AG04450 (cell line): ENCODE measurements at regions of chr7 and their contacts with region 1.

Region 1: DNA sequence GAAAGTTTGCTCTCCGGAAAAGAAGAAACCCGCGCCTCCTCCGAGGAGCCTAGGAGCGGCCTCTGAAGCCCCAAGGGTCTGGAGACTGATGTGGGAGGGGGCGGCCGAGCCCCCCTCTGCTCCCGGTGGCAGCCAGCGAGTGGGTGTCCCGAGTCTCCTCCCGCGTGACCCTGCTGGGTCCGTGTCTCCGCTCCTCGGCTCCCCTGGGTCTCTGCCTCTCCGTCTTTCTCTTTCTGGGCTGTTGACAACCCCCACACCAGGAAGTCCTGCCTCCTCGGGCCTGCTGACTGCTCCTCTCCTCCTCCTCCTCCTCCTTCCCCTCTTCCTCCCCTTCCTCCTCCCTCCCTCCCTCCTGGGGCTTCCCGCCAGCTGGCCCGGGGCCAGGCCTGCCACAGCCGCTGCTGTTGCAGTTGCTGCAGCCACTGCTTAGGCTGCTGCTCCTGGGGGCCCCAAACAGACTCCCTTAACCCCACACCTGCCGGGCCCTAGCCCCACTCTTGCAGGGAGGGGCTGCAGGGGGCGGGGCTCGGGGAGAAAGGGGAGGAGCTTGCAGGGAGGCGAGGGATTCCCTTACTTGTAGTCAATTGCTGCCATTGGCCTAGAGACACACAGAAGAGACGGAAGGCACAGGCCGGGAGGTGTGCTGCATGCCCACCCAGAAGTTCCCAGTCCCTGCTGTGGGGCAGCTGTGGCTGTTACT is at the start of gene TSC22D4:
- DNase-seq: peak; percentile 81
- H3K4me3 ChIP-seq: peak within 1 kb of the TSS; percentile 94
- H3K27ac ChIP-seq: peak within 1 kb of the TSS; percentile 68
- H3K27me3 ChIP-seq: no peaks in the 10 kb centered on the region
- CTCF ChIP-seq: no peak
- polyA plus RNA-seq, gene TSC22D4: 10.2 and 11.3 TPM in 2 replicates

Region 2: GRCh38 chr7:99997545-99998137 is 481.5 kb before region 1 on chr7:
- CTCF ChIA-PET with region 1: no interaction called
- POLR2A ChIA-PET with region 1: no interaction called
- DNase-seq: no peak
- H3K4me3 ChIP-seq: peak overlapping the region; percentile 39
- H3K27ac ChIP-seq: no peak overlapping the region
- H3K27me3 ChIP-seq: no peaks in the 10 kb centered on the region
- CTCF ChIP-seq: peak; percentile 23; the same call in 1 of the 2 replicates

Region 3: DNA sequence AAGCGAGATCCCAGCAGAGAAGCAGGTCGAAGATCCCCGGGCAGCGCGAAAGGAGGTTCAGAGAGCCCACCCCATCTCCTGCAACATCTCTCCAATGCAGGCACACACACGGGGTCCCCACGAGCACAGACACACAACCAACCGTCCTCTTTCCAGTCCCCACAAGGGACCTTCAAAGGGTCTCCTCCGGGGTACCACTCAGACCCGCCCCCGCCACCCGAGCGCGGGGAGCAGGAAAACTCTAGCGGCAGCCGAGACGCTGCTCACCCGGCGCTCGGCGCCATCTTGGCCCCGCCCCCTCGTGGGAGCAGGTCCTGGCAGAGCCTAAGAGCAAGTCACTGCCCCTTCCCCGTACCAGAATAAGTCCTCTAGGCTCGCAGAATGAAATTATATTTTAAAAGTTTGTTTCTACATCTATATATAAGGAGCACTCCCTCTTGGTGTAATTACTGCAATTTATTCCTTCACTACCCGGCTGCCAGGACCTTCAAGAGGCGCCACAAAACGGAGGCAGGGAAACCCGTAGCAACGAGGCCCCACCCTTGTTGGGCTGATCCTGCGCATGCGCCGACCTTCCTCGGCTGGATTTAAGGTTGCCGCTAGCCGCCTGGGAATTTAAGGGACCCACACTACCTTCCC is 359.9 kb before region 1 on chr7 and contains the starts of genes CNPY4 and TAF6:
- CTCF ChIA-PET with region 1: no interaction called
- POLR2A ChIA-PET with region 1: no interaction called
- DNase-seq: peak; percentile 91
- H3K4me3 ChIP-seq: peak within 1 kb of the TSS; percentile 98
- H3K27ac ChIP-seq: peak within 1 kb of the TSS; percentile 74
- H3K27me3 ChIP-seq: no peaks in the 10 kb centered on the region
- CTCF ChIP-seq: no peak
- polyA plus RNA-seq, gene CNPY4: 26.3 and 29.7 TPM in 2 replicates
- polyA plus RNA-seq, gene TAF6: 28.2 and 31.2 TPM in 2 replicates

Region 4: GRCh38 chr7:100428199-100428966 is 50.7 kb before region 1 on chr7 and contains the start of gene ZCWPW1:
- CTCF ChIA-PET with region 1: no interaction called
- POLR2A ChIA-PET with region 1: interaction called, 15 read pairs
- DNase-seq: peak; percentile 95
- H3K4me3 ChIP-seq: peak within 1 kb of the TSS; percentile 86
- H3K27ac ChIP-seq: peak within 1 kb of the TSS; percentile 100
- H3K27me3 ChIP-seq: no peaks in the 10 kb centered on the region
- CTCF ChIP-seq: 0 out of 2 replicates have a peak, but pooled peaks have one; percentile 9
- polyA plus RNA-seq, gene ZCWPW1: 0.89 and 1.5 TPM in 2 replicates

Region 5: DNA sequence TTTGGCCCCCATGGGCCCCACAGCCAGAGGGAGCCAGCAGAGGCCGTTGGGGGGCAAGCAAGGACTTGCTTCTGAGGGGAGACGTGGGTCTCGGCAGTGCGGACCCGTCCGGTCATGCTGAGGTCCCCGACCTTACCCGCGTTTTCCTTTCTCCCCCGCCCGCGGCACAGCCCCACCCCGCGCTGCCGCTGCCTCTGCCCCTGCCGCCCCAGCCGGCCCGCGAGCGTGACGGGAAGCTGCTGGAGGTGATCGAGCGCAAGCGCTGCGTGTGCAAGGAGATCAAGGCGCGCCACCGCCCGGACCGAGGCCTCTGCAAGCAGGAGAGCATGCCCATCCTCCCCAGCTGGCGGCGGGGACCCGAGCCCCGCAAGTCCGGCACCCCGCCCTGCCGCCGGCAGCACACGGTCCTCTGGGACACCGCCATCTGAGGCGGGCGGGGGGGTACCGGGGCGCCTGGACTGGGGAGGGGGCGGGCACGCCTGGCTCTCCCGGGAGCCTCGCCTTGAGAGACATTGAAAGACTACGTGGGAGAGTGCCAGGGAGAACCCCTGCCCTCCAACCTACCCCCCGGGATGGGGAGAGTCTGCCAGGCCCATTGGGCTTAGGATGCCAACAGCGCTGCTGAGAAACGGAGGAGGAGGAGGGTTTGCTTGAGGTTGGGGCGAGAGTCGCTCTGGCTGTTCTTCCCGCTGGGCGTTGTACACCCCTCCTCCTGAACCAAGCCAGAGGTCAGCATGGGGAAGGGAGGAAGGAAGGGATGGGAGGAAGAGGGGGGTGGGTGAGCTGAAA is 14.6 kb after region 1 on chr7:
- CTCF ChIA-PET with region 1: interaction called, 17 read pairs
- POLR2A ChIA-PET with region 1: interaction called, 6 read pairs
- DNase-seq: no peak
- H3K4me3 ChIP-seq: peak overlapping the region; percentile 29; the same call in 1 of the 2 replicates
- H3K27ac ChIP-seq: no peak overlapping the region
- H3K27me3 ChIP-seq: peaks cover 3% of the 10 kb centered on the region
- CTCF ChIP-seq: no peak

Region 6: GRCh38 chr7:100520138-100520537 is 41.0 kb after region 1 on chr7:
- CTCF ChIA-PET with region 1: interaction called, 11 read pairs
- POLR2A ChIA-PET with region 1: no interaction called
- DNase-seq: no peak
- H3K4me3 ChIP-seq: no peak overlapping the region
- H3K27ac ChIP-seq: no peak overlapping the region
- H3K27me3 ChIP-seq: no peaks in the 10 kb centered on the region
- CTCF ChIP-seq: no peak

Region 7: GRCh38 chr7:100545360-100546128 is 66.4 kb after region 1 on chr7:
- CTCF ChIA-PET with region 1: interaction called, 12 read pairs
- POLR2A ChIA-PET with region 1: no interaction called
- DNase-seq: peak; percentile 53
- H3K4me3 ChIP-seq: no peak overlapping the region
- H3K27ac ChIP-seq: peak overlapping the region; percentile 81
- H3K27me3 ChIP-seq: no peaks in the 10 kb centered on the region
- CTCF ChIP-seq: peak; percentile 29; the same call in 1 of the 2 replicates

Region 8: GRCh38 chr7:100555701-100556100 is 76.6 kb after region 1 on chr7:
- CTCF ChIA-PET with region 1: interaction called, 19 read pairs
- POLR2A ChIA-PET with region 1: interaction called, 12 read pairs
- DNase-seq: no peak
- H3K4me3 ChIP-seq: no peak overlapping the region
- H3K27ac ChIP-seq: no peak overlapping the region
- H3K27me3 ChIP-seq: no peaks in the 10 kb centered on the region
- CTCF ChIP-seq: no peak

Region 9: GRCh38 chr7:100563809-100564400 is 84.8 kb after region 1 on chr7:
- CTCF ChIA-PET with region 1: interaction called, 19 read pairs
- POLR2A ChIA-PET with region 1: no interaction called
- DNase-seq: no peak
- H3K4me3 ChIP-seq: no peak overlapping the region
- H3K27ac ChIP-seq: no peak overlapping the region
- H3K27me3 ChIP-seq: no peaks in the 10 kb centered on the region
- CTCF ChIP-seq: peak; percentile 97